ENCODE measurements at regions of chr4 and their contacts with region 1.

Region 1: GRCh38 chr4:73922766-73923630 is 53.8 kb downstream of the CXCL1 start:
- DNase-seq: no peak

Region 2: GRCh38 chr4:73662709-73663546 is 260.1 kb before region 1 on chr4:
- intact Hi-C with region 1: loop called (anchors 5 kb)
- DNase-seq: no peak

Measured in cardiac septum (tissue), 1 donor.